Caco-2 (cell line): ENCODE measurements at regions of chr10 and their contacts with region 1.

Region 1: DNA sequence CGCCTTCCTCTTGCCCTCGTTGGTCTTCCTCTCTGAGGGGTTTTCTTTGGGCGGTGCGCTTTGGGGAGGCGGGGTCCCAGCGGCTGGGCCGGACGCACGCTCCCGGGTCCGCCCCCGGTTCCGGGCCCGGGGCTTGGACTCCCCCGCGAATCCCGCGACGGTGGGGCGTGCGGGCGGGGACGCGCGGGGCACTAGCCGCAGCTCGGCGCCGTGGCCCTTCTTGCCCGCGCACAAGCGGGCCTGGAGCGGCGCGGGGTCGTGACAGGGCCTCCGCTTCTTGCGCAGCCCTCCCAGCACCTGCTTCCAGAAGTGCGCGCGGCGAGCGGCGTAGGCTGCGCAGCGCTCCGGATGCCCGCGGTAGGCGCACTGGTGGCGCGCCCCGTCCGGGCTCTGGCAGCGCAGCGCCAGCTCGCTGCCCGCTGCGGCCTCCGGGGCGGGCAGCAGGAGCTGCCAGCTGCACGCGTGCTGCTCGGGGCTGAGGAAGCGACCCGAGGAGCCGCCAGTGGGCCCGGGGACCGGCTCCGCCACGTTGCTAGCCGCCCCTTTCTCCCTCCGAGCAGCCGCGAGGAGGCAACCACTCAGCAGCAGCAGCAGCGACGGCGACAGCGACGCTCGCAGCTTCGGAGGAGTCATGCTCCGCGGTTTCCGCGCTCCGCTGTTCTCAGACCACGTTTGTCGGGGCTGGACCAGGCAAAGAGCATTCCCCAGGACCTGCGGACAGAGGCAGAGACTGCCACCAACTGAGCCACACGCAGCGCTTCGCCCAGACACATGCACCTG is 759 bp downstream of the FGFBP3 start:
- DNase-seq: peak; percentile 90 to 91
- H3K4me3 ChIP-seq: peak overlapping the region; percentile 91
- H3K4me3 Mint-ChIP-seq: peak overlapping the region; percentile 85
- H3K27ac Mint-ChIP-seq: peak overlapping the region; percentile 82
- H3K4me1 ChIP-seq: peaks cover 5% of the 10 kb centered on the region; the same call in 1 of the 2 replicates
- H3K4me1 Mint-ChIP-seq: peaks cover 12% of the 10 kb centered on the region
- H3K27me3 ChIP-seq: no peaks in the 10 kb centered on the region
- H3K27me3 Mint-ChIP-seq: peaks cover 2% of the 10 kb centered on the region
- CTCF ChIP-seq: peak in 1 of 2 experiments; percentile 82

Region 2: GRCh38 chr10:91389636-91390512 is 518.7 kb before region 1 on chr10:
- CTCF ChIA-PET with region 1: no interaction called
- POLR2A ChIA-PET with region 1: no interaction called
- intact Hi-C with region 1: loop called (anchors 2 kb)
- DNase-seq: peak in 1 of 2 experiments; percentile 59
- H3K4me3 ChIP-seq: no peak overlapping the region
- H3K4me3 Mint-ChIP-seq: no peak overlapping the region
- H3K27ac Mint-ChIP-seq: no peak overlapping the region
- H3K4me1 ChIP-seq: peaks cover 5% of the 10 kb centered on the region; the same call in 1 of the 2 replicates
- H3K4me1 Mint-ChIP-seq: no peaks in the 10 kb centered on the region
- H3K27me3 ChIP-seq: peaks cover 1% of the 10 kb centered on the region; the same call in 1 of the 2 replicates
- H3K27me3 Mint-ChIP-seq: peaks cover 19% of the 10 kb centered on the region
- CTCF ChIP-seq: peak; percentile 49 to 53

Region 3: DNA sequence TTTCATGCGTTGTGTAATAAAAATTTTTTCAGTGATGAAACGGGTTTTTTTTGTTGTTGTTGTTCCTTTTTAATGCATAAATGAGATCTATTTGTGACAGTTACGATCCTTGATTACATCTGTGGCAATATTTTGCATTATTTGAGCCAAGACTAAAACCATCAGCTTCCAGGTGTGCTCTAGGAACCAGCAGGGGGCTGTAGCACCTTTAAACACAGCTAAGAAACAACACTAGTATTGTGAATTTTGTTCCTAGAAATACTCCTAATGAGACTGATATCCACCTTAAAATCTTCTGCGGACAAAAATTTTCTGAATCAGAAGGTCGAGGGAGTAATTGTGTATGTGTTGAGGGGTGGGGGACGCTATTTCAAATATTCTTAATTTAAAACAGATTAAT is 51.9 kb before region 1 on chr10:
- CTCF ChIA-PET with region 1: interaction called, 11 read pairs
- POLR2A ChIA-PET with region 1: no interaction called
- intact Hi-C with region 1: loop called (anchors 1 kb)
- DNase-seq: peak in 1 of 2 experiments; percentile 33
- H3K4me3 ChIP-seq: no peak overlapping the region
- H3K4me3 Mint-ChIP-seq: no peak overlapping the region
- H3K27ac Mint-ChIP-seq: no peak overlapping the region
- H3K4me1 ChIP-seq: no peaks in the 10 kb centered on the region
- H3K4me1 Mint-ChIP-seq: no peaks in the 10 kb centered on the region
- H3K27me3 ChIP-seq: no peaks in the 10 kb centered on the region
- H3K27me3 Mint-ChIP-seq: no peaks in the 10 kb centered on the region
- CTCF ChIP-seq: peak; percentile 37 to 77

Region 4: GRCh38 chr10:91887272-91888076 is 21.1 kb before region 1 on chr10:
- CTCF ChIA-PET with region 1: interaction called, 3 read pairs
- POLR2A ChIA-PET with region 1: interaction called, 9 read pairs
- intact Hi-C with region 1: loop called (anchors 2 kb)
- DNase-seq: peak; percentile 73 to 77
- H3K4me3 ChIP-seq: peak overlapping the region; percentile 58
- H3K4me3 Mint-ChIP-seq: peak overlapping the region; percentile 92
- H3K27ac Mint-ChIP-seq: peak overlapping the region; percentile 82
- H3K4me1 ChIP-seq: peaks cover 6% of the 10 kb centered on the region; the same call in 1 of the 2 replicates
- H3K4me1 Mint-ChIP-seq: peaks cover 13% of the 10 kb centered on the region
- H3K27me3 ChIP-seq: no peaks in the 10 kb centered on the region
- H3K27me3 Mint-ChIP-seq: no peaks in the 10 kb centered on the region
- CTCF ChIP-seq: no peak

Region 5: DNA sequence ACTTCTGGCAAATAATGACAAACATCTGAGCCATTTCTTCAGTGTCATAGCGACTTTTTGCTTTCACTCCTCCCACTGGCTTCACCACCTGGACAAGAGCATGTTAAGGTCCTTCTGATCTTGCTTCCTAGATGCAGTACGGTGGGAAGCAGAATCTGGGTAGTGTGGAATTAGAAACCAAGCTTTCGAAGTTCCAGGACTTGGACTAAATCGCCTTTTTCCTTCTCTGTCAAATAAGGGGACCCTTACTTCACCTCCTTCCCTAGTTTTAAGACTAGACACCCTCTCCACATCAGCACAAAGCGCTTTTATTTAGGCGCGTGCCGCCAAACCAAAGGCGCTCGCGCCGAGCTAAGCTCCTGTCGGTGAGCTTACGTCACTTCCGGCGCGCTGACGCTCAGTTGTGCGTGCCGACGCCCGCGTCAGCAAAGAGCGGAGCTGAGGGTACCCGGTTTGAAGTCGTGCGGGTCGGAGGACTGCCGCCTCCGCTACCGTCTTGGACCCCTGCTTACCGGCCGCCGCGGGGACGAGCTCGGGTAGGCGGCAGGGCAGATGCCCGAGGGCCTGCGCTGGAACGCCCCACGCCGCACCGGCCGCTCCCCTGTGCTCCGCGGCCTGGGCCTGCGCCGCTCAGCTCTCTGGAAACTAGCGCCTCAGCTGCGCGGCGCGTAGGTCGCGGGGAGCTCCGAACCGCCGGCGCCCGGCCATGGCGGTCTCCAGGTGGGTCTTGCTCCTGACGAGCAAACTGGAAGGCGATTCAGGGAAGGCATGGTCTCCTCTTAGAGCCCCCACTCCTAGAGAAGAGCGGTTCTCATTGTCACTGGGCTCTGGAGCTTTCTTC is 15.1 kb after region 1 on chr10 and contains the start of gene BTAF1:
- CTCF ChIA-PET with region 1: interaction called, 6 read pairs
- POLR2A ChIA-PET with region 1: interaction called, 10 read pairs
- intact Hi-C with region 1: loop called (anchors 1 kb)
- DNase-seq: peak; percentile 89
- H3K4me3 ChIP-seq: peak within 1 kb of the TSS; percentile 85
- H3K4me3 Mint-ChIP-seq: peak within 1 kb of the TSS; percentile 90
- H3K27ac Mint-ChIP-seq: peak within 1 kb of the TSS; percentile 97
- H3K4me1 ChIP-seq: peaks cover 14% of the 10 kb centered on the region; the same call in 1 of the 2 replicates
- H3K4me1 Mint-ChIP-seq: peaks cover 26% of the 10 kb centered on the region
- H3K27me3 ChIP-seq: no peaks in the 10 kb centered on the region
- H3K27me3 Mint-ChIP-seq: no peaks in the 10 kb centered on the region
- CTCF ChIP-seq: no peak
- total RNA-seq, gene BTAF1: 47.7 and 49.7 TPM in 2 replicates